ENCODE measurements at regions of chr21 and their contacts with region 1.

Region 1: GRCh38 chr21:37072988-37073416 is at the starts of genes PIGP and TTC3:
- DNase-seq: peak; percentile 96 to 98
- ATAC-seq: peak; percentile 89 to 94 (median 92)
- H3K4me3 ChIP-seq: peak within 1 kb of the TSS; percentile 63 to 95 (median 89)
- H3K27ac ChIP-seq: peak within 1 kb of the TSS; percentile 94 to 100 (median 98)
- H3K4me1 ChIP-seq: peaks cover 0 to 30% (median 23%) of the 10 kb centered on the region in 9 donors
- H3K27me3 ChIP-seq: no peaks in the 10 kb centered on the region
- CTCF ChIP-seq: no peak
- total RNA-seq, gene PIGP: 33.9 to 41.8 (median 38.3) TPM
- total RNA-seq, gene TTC3: 33.1 to 62.1 (median 54.6) TPM

Region 2: DNA sequence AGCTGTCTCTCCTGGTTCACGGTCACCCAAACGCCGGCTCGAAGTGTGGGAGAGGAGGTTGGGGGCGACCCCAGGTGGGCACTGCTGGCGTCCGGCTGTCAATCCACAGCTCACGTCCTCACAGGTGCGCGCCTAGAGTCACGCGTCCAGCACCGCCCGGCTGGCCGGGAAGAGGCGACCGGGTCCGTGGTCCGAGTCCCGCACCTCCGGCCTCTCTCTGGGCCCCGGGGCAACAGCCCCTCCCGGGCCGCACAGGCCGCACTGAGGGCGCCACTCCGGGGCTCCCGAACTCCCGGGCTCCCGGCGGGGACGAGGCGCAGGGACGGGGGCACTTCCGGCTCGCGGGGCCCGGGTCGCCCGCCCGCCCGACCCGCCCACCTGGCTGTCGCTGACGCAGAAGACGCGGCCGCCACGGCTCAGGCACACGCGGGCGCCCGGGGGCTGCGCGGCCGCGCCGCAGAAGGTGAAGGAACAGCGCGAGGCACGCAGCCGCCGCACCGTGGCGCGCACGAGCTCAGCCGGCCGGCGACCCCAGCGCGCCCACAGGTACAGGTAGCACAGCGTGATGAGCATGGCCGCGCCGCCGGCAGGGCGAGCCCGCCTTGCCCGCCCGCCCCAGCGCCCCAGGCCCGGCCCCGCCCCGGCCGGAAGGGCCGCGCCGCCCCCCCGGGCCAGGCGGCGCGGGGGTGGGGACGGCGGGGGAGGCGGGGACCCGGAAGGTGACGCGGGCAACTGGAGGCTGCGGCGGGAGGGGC is 106.8 kb before region 1 on chr21 and contains the start of gene HLCS:
- intact Hi-C with region 1: loop called in 2 of 10 experiments (anchors 5 to 10 kb)
- DNase-seq: peak; percentile 43 to 77
- ATAC-seq: peak; percentile 44 to 93 (median 77)
- H3K4me3 ChIP-seq: peak within 1 kb of the TSS; percentile 68 to 91 (median 78)
- H3K27ac ChIP-seq: peak within 1 kb of the TSS in 9 of 10 donors; percentile 66 to 87 (median 79)
- H3K4me1 ChIP-seq: peaks cover 0 to 18% (median 7%) of the 10 kb centered on the region in 9 donors
- H3K27me3 ChIP-seq: no peaks in the 10 kb centered on the region
- CTCF ChIP-seq: peak in 4 of 9 donors; percentile 15 to 42 (median 22)
- total RNA-seq, gene HLCS: 5.0 to 9.6 (median 7.5) TPM

Region 3: GRCh38 chr21:36989699-36990507 is 83.1 kb before region 1 on chr21:
- intact Hi-C with region 1: loop called in 5 of 10 experiments (anchors 5 to 10 kb)
- DNase-seq: peak; percentile 94 to 97
- ATAC-seq: peak; percentile 98 to 99 (median 98)
- H3K4me3 ChIP-seq: peak overlapping the region; percentile 26 to 76 (median 66)
- H3K27ac ChIP-seq: peak overlapping the region; percentile 61 to 97 (median 94)
- H3K4me1 ChIP-seq: peaks cover 0 to 16% (median 4%) of the 10 kb centered on the region in 9 donors
- H3K27me3 ChIP-seq: peaks cover 0 to 20% (median 16%) of the 10 kb centered on the region in 7 donors
- CTCF ChIP-seq: peak; percentile 89 to 99 (median 93)

Region 4: DNA sequence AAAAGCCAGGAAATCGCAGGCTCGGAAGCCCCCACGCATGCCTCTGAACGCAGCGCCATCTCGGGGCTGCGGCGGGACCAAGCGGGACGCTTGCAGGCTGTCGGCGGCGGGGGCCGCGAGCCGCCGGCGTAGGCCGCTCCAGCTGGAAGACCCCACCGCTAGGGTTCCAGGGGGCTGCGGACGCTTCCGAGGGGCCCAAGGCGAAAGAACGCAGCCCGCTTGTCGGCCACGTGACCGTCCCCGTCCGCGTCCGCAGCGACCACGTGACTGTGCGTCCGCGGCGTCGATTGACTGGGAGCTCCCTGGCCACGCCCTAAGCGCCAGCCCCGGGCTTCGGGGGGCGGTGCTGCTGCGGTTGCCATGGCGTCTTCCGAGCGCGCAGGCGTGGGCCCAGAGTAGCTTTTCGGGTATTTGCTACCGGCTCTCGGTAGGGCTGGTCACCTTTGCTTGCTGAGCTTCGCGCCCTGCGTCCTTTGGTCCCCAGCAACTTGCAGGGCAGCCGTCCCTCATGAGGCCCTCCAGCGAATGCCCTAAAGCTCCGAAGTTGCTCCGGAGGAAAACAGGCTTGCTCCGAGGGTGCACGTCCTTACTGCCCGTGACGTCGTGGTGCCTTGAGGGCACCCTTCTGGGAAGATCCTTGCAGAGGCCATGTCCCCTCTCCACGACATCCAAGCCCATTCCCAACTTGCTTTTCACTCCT is 490.8 kb after region 1 on chr21:
- intact Hi-C with region 1: loop called in 1 of 10 experiments (anchors 10 kb)
- DNase-seq: peak; percentile 93
- ATAC-seq: peak; percentile 94 to 98 (median 97)
- H3K4me3 ChIP-seq: peak overlapping the region; percentile 58 to 92 (median 70)
- H3K27ac ChIP-seq: peak overlapping the region; percentile 55 to 98 (median 94)
- H3K4me1 ChIP-seq: peaks cover 0 to 40% (median 26%) of the 10 kb centered on the region in 9 donors
- H3K27me3 ChIP-seq: no peaks in the 10 kb centered on the region
- CTCF ChIP-seq: peak in 7 of 9 donors; percentile 34 to 69 (median 46)

Measured in heart right ventricle (tissue), 16 donors.